Aorta (tissue), 5 donors: ENCODE measurements at regions of chr16 and their contacts with region 1.

Region 1: GRCh38 chr16:53054670-53055485 is at the start of gene CHD9:
- DNase-seq: peak; percentile 90 to 94
- ATAC-seq: peak; percentile 98
- H3K4me3 ChIP-seq: peak within 1 kb of the TSS; percentile 42 to 67
- H3K27ac ChIP-seq: peak within 1 kb of the TSS in 1 of 2 donors; percentile 46
- H3K4me1 ChIP-seq: no peaks in the 10 kb centered on the region
- H3K27me3 ChIP-seq: no peaks in the 10 kb centered on the region
- total RNA-seq, gene CHD9: 87.3 to 133 TPM

Region 2: DNA sequence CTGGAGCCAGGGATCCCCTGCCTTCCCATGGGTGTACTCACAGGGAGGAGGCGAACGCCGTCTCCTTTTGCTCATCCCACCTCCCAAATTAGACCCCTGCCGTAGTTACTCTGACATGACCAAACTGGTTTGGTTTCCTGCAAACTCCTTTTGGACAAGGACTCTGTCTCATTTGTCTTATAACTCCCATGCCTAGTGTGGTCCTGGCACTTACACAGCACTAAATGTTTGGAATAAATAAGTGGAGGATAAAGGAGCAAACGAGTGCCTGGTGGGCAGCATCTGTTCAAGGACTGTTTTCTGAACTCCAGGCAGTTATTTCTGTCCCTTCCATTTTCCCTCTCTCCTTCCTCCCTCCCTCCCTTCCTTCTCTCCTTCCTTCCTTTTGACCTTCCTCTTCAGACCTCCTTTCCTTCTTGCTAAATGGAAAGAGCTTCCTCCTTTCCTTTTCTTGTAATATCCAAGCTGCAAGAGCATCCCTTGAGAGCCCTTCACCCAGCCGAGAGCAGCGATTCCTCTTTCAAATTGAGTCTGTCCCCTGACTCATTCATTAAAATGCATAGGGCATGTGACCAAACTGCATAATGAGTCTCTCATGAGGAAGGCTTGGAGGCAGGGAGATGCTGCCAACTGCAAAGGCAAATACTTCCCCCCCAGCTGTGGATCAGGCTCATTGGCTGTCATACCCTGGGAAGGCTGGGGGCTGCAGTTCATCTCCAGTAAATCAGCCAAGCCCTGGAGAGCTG is 36.8 kb after region 1 on chr16:
- intact Hi-C with region 1: loop called (anchors 5 kb)
- DNase-seq: peak in 1 of 2 donors; percentile 79
- ATAC-seq: peak; percentile 63
- H3K4me3 ChIP-seq: no peak overlapping the region
- H3K27ac ChIP-seq: peak overlapping the region; percentile 84 to 97
- H3K4me1 ChIP-seq: peaks cover 3 to 8% of the 10 kb centered on the region in 2 donors
- H3K27me3 ChIP-seq: no peaks in the 10 kb centered on the region

Region 3: DNA sequence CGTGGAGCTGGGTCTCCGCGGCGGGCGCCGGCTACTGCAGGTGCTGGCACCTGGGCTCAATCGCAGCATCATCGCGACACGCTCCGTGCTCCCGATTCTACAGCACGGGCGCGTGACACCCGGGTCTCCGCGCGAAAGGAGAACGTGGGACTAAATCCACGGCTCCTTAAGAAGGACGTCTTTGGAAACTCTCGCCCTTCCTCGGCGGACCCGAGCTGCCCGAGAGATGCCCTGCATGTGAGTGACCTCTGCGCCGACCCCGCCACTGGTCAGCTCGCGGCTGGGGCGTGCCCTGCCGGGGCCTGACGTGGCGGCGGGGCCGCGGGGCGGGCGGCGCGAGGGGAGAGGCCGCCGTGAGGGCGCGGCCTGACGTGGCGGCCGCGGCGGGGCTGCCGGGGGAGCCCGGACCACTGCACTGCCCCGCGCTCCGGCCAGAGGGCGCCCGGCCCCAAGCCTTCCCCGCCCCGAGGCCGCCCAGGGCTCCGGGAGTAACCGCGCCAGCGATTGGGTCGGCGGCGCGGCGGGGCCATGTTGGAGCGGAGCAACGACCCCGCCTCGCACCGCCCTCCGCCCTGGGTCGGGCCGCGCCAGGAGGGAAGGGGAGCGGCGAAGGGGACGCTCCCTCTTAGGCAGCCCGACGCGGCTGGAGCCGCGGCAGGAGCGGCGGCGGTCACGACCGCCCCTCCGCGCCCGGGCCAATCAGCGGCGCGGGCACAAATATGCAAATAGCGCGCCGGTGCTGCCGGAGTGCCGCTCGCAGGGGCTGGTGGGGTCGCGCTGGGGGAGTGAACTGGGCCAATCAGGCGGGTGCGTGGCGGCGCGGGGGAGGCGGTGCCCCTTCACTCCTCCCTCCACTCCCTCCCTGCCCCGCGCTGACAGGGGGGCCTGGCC is 75.5 kb after region 1 on chr16:
- intact Hi-C with region 1: loop called (anchors 2 to 5 kb)
- DNase-seq: peak; percentile 99
- ATAC-seq: peak; percentile 97
- H3K4me3 ChIP-seq: peak overlapping the region; percentile 96
- H3K27ac ChIP-seq: peak overlapping the region; percentile 89 to 98
- H3K4me1 ChIP-seq: no peaks in the 10 kb centered on the region
- H3K27me3 ChIP-seq: no peaks in the 10 kb centered on the region

Region 4: DNA sequence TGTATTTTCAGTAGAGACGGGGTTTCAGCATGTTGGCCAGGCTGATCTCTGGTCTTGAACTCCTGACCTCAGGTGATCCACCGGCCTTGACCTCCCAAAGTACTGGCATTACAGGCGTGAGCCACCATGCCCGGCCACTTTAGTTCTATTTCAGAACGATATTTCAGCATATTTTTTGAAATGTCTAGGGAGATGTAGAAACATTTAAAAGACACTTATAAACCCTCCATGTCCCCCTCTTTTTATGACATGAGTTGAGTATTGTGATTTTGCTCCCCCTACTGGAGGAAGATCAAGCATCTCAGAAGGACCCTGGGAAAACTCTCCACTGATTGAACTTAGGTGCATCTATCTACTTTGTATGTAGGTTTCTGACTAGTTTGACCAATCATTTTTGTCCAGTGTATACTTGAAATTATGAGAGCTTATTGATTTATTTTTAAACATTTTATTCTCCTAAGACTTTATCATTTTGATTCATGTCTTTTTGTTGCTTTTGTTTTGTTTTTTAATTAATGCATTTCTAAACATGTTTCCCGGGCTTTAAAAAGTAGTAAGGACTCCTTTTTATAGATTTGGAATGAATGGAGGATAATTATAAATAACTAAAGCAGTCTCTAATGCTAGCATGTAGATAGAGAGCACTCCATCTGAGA is 105.0 kb after region 1 on chr16:
- intact Hi-C with region 1: loop called in 1 of 2 experiments (anchors 5 kb)
- DNase-seq: no peak
- ATAC-seq: peak; percentile 70
- H3K4me3 ChIP-seq: no peak overlapping the region
- H3K27ac ChIP-seq: peak overlapping the region in 1 of 2 donors; percentile 19
- H3K4me1 ChIP-seq: peaks cover 0 to 2% of the 10 kb centered on the region in 2 donors
- H3K27me3 ChIP-seq: no peaks in the 10 kb centered on the region

Region 5: DNA sequence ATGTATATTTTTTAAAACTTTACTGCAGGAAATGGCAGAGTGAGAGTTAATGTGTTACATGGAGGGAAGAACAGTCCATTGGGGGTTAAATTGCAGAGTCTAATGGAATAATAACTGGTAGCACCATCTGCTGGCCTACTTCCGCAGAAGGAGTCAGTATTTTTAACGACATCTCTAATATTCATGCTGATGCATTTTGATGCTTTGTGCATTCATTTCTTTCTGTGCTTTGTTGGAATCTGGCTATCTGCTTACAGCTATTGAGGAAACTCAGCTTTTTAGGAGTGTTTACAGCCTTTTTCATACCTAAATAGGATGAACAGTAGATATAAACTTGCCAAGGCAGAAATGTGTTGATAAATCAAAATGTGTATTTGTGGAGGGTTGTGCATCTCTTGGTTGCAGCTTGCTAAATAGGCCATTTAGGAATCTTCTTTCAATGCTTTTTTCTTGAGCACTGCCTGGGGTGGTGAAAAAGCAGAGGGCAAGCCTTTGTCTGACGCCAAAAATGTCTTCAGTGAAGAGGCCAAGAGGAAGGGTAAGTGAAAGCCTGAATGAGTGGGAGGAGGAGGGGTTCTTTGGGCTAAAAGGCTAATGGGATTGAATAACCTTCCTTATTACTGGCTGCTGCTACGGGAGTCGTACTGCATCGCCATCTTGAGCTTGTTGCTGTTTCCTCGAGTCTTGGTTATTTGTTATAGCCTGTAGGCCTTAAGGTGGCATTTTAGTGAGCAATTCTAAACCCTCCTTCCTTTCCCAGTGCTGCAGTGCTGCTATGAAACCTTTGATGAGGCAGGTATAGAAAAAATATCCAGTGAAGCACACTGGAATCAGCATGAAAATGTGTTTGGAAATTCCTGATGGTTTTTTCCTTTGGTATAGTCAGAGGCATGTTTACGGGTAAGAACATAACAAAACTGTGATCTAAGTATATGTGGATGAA is 153.2 kb after region 1 on chr16:
- intact Hi-C with region 1: loop called (anchors 5 to 10 kb)
- DNase-seq: no peak
- ATAC-seq: peak; percentile 92
- H3K4me3 ChIP-seq: peak overlapping the region; percentile 11 to 69
- H3K27ac ChIP-seq: peak overlapping the region; percentile 67 to 85
- H3K4me1 ChIP-seq: peaks cover 0 to 3% of the 10 kb centered on the region in 2 donors
- H3K27me3 ChIP-seq: no peaks in the 10 kb centered on the region

Region 6: GRCh38 chr16:53282975-53283946 is 228.4 kb after region 1 on chr16:
- intact Hi-C with region 1: loop called (anchors 5 to 10 kb)
- DNase-seq: no peak
- ATAC-seq: no peak
- H3K4me3 ChIP-seq: no peak overlapping the region
- H3K27ac ChIP-seq: no peak overlapping the region
- H3K4me1 ChIP-seq: no peaks in the 10 kb centered on the region
- H3K27me3 ChIP-seq: no peaks in the 10 kb centered on the region

Region 7: GRCh38 chr16:53503270-53503923 is 448.5 kb after region 1 on chr16:
- intact Hi-C with region 1: loop called in 1 of 2 experiments (anchors 5 kb)
- DNase-seq: peak; percentile 100
- ATAC-seq: peak; percentile 97
- H3K4me3 ChIP-seq: peak overlapping the region; percentile 8 to 62
- H3K27ac ChIP-seq: peak overlapping the region; percentile 73 to 78
- H3K4me1 ChIP-seq: peaks cover 0 to 4% of the 10 kb centered on the region in 2 donors
- H3K27me3 ChIP-seq: no peaks in the 10 kb centered on the region